ENCODE measurements at regions of chr19 and their contacts with region 1.

Region 1: DNA sequence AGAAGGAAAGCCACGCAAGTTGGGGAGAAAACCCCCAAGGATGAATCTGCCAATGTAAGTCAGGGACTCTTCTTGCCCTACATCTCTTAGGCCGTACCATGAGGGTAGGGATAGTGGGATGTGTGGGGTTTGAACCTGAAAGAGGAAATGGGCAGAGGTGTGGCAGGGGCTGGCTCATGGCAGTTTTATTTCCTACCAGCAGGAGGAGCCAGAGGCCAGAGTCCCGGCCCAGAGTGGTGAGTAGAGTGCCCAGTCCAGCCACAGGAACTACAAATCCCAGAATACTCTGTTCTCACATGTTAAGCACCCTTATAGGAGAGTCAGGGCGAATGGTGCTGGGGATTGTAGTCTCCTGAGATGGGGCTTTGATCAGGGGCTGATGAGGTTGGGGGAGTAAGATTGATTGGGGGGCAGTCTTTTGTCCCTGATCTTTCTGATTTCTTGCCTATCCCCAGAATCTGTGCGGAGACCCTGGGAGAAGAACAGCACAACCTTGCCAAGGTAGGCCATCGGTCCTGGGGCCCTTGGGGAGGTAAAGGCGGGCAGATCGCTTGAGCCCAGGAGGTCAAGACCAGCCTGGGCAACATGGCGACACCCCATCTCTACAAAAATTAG is 16.5 kb downstream of the VASP start:
- DNase-seq: peak; percentile 47 to 89
- H3K4me3 ChIP-seq: no peak overlapping the region
- H3K27ac ChIP-seq: peak overlapping the region; percentile 38 to 46
- H3K4me1 ChIP-seq: peaks cover 0 to 6% of the 10 kb centered on the region in 2 donors
- H3K27me3 ChIP-seq: no peaks in the 10 kb centered on the region
- CTCF ChIP-seq: peak; percentile 86 to 92 (median 90)

Region 2: GRCh38 chr19:45558399-45558878 is 34.7 kb after region 1 on chr19:
- intact Hi-C with region 1: loop called (anchors 5 kb)
- DNase-seq: no peak
- H3K4me3 ChIP-seq: no peak overlapping the region
- H3K27ac ChIP-seq: no peak overlapping the region
- H3K4me1 ChIP-seq: no peaks in the 10 kb centered on the region
- H3K27me3 ChIP-seq: no peaks in the 10 kb centered on the region
- CTCF ChIP-seq: peak; percentile 22 to 55 (median 32)

Measured in ascending aorta (tissue), 2 donors.